ENCODE measurements at regions of chr5 and their contacts with region 1.

Region 1: DNA sequence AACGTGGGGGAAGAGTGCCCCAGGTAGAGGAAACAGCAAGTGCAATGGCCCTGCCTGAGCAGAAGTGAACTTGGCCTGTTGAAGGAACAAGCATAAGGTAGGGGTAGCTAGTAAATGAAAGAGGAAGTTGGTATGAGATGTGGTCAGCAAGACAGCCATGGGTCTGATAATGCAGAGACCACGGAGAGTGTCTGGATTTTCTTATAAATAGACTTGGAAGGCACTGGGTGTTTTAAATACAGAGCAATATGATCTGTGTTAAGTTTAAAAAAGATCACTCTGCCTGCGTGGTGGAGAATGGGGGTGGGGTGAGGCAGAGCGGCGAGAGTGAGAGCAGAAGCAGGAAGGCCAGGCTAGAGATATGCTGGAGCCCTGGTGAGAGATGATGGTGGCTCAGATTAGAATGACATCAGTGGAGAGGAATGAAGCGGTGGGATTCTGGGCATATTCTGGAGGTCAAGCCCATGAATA is 4.2 kb downstream of the ADAM19 start:
- DNase-seq: no peak
- H3K4me3 Mint-ChIP-seq: no peak overlapping the region
- H3K27ac Mint-ChIP-seq: no peak overlapping the region
- H3K4me1 Mint-ChIP-seq: peaks cover 8% of the 10 kb centered on the region
- H3K27me3 Mint-ChIP-seq: no peaks in the 10 kb centered on the region
- CTCF ChIP-seq: no peak

Region 2: DNA sequence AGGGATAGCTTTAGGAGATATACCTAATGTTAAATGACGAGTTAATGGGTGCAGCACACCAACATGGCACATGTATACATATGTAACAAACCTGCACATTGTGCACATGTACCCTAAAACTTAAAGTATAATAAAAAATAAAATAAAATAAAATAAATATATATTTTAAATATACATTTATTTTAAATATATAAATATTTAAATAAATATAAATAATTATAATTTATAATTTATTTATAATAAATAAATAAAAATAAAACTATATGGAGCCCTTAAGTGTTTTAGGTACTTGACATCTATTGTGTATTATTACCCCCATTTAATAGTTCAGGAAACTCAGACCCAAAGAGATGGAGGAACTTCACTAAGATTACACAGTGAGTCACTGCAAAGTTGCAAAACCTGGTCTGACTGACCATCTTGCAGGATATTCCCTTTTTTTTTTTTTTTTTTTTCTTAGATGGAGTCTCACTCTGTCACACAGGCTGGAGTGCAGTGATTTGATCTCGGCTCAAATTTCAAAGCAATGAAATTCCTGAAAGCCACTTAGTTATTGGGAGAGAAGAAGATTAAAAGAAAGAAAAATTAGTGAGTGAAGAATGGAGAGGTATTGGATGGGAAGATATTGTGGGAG is 94.2 kb after region 1 on chr5:
- CTCF ChIA-PET with region 1: no interaction called
- intact Hi-C with region 1: loop called (anchors 5 kb)
- DNase-seq: peak; percentile 63
- H3K4me3 Mint-ChIP-seq: no peak overlapping the region
- H3K27ac Mint-ChIP-seq: no peak overlapping the region
- H3K4me1 Mint-ChIP-seq: peaks cover 19% of the 10 kb centered on the region
- H3K27me3 Mint-ChIP-seq: no peaks in the 10 kb centered on the region
- CTCF ChIP-seq: no peak

Measured in Calu3 (cell line).